Calu3 (cell line): ENCODE measurements at regions of chr3 and their contacts with region 1.

Region 1: GRCh38 chr3:172142051-172142863 is 102.9 kb downstream of the FNDC3B start:
- DNase-seq: peak; percentile 43
- H3K4me3 Mint-ChIP-seq: peak overlapping the region; percentile 36
- H3K27ac Mint-ChIP-seq: peak overlapping the region; percentile 86
- H3K4me1 Mint-ChIP-seq: peaks cover 76% of the 10 kb centered on the region
- H3K27me3 Mint-ChIP-seq: no peaks in the 10 kb centered on the region
- CTCF ChIP-seq: no peak

Region 2: GRCh38 chr3:171809821-171810628 is 332.2 kb before region 1 on chr3 and contains the start of gene PLD1:
- CTCF ChIA-PET with region 1: interaction called, 3 read pairs
- intact Hi-C with region 1: loop called (anchors 5 kb)
- DNase-seq: peak; percentile 97
- H3K4me3 Mint-ChIP-seq: peak within 1 kb of the TSS; percentile 96
- H3K27ac Mint-ChIP-seq: peak within 1 kb of the TSS; percentile 94
- H3K4me1 Mint-ChIP-seq: peaks cover 62% of the 10 kb centered on the region
- H3K27me3 Mint-ChIP-seq: no peaks in the 10 kb centered on the region
- CTCF ChIP-seq: no peak
- total RNA-seq, gene PLD1: 58.5 and 61.2 TPM in 2 replicates

Region 3: GRCh38 chr3:171936191-171936841 is 205.9 kb before region 1 on chr3:
- CTCF ChIA-PET with region 1: no interaction called
- intact Hi-C with region 1: loop called (anchors 5 kb)
- DNase-seq: peak; percentile 84
- H3K4me3 Mint-ChIP-seq: peak overlapping the region; percentile 50
- H3K27ac Mint-ChIP-seq: peak overlapping the region; percentile 73
- H3K4me1 Mint-ChIP-seq: peaks cover 91% of the 10 kb centered on the region
- H3K27me3 Mint-ChIP-seq: no peaks in the 10 kb centered on the region
- CTCF ChIP-seq: no peak

Region 4: DNA sequence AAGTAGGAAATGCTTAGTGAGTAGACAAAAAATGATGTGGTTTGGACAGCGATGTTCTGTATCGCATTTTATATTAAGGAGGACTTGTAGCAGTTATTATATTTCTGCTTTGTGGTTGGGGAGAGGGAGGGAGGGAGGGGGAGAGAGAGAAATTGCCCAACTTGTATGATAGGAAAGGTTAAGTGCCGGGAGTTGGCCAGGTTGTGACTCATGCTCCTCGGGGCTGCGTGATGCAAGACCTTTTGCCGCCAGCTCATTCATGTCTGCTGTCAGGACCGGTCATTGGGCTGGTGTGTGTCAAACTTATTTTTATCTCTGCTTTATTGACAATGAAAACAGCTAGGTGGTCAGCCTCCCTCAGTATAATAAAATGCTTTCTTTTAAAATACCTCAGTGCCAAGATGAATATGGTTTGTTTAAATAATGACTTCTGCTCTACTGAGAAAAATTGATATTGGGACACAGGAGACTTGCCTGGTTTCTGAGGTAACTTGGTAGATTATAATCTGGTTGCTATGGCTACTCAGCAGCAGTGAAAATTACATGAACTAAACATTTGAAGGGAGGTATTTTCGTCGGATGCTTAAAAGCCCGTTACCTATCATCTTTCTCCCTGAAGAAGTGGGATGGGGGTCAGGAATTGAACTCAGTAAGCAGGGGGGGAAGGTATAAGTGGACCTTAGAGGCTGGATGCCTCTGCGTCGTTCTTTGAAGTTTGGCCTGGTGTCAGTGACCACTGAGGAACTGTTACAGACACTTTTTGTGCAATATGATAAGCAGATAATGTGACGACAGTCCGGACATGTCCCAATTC is 12.2 kb before region 1 on chr3:
- CTCF ChIA-PET with region 1: interaction called, 21 read pairs
- intact Hi-C with region 1: no loop called
- DNase-seq: peak; percentile 95
- H3K4me3 Mint-ChIP-seq: peak overlapping the region; percentile 61
- H3K27ac Mint-ChIP-seq: peak overlapping the region; percentile 100
- H3K4me1 Mint-ChIP-seq: peaks cover 88% of the 10 kb centered on the region
- H3K27me3 Mint-ChIP-seq: no peaks in the 10 kb centered on the region
- CTCF ChIP-seq: no peak

Region 5: GRCh38 chr3:172260481-172260780 is 118.2 kb after region 1 on chr3:
- CTCF ChIA-PET with region 1: interaction called, 3 read pairs
- intact Hi-C with region 1: loop called (anchors 1 kb)
- DNase-seq: peak; percentile 82
- H3K4me3 Mint-ChIP-seq: peak overlapping the region; percentile 17
- H3K27ac Mint-ChIP-seq: peak overlapping the region; percentile 76
- H3K4me1 Mint-ChIP-seq: peaks cover 81% of the 10 kb centered on the region
- H3K27me3 Mint-ChIP-seq: no peaks in the 10 kb centered on the region
- CTCF ChIP-seq: no peak